ENCODE measurements at regions of chr3 and their contacts with region 1.

Region 1: GRCh38 chr3:171088964-171089754 is 62.6 kb upstream of the SLC2A2 start:
- DNase-seq: no peak
- CTCF ChIP-seq: no peak

Region 2: DNA sequence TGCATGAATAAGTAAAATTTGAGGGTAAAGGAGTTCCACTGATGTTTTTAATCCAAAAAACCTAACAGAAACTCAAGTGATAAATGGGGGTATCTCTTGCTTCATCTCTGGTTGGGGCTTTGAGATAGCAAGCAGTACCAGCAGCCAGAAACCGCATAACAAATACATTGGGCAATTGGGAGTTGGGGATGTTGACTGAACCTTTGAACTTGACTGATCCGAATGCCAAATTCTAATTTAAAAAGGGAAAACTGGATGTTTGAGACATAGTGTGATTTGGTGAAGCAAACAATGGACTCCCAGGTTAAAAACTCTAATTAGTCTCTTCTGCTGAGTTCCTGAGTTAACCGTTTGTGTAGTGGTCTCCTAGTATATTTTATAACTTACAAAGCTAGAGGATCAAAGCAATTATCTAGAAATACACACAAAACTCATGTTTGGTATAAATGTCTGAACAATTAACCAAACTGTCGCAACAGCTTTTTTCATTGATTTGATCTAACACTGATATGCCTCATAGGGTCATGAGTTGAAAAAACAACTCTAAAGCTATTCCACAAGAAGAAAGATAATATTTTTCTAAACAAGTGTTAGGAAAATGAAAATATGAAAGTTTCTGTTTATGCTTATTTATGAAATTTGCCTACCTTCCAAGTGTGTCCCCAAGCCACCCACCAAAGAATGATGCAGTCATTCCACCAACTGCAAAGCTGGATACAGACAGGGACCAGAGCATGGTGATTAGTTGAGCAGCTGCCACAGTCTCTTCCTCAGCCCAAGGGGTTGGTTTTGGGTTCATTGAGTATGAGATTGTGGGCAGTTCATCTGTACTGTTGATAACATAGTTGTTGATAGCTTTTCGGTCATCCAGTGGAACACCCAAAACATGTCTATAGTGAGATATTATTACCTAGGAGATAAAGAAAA is 75.1 kb before region 1 on chr3:
- CTCF ChIA-PET with region 1: no interaction called
- POLR2A ChIA-PET with region 1: no interaction called
- DNase-seq: no peak
- CTCF ChIP-seq: no peak

Region 3: DNA sequence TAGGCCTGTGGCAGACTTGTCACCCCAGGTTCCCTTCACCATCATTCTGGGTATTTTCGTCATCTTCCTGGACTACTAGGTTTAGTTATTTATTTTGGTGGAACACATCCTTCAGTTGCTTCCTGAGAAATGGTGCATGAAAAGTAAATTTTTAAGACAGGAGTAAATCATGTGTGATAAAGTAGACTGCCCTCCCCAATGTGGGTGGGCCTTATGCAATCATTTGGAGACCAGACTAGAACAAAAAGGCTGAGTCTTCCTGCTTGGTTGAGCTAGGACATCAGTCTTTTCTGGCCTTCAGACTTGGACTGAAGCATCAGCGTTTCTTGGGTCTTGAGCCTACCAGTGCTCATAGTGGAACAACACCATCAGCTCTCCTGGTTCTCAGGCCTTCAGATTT is 11.9 kb before region 1 on chr3:
- CTCF ChIA-PET with region 1: interaction called, 10 read pairs
- POLR2A ChIA-PET with region 1: no interaction called
- DNase-seq: no peak
- CTCF ChIP-seq: no peak

Region 4: GRCh38 chr3:171108066-171108465 is 18.9 kb after region 1 on chr3:
- CTCF ChIA-PET with region 1: interaction called, 12 read pairs
- POLR2A ChIA-PET with region 1: no interaction called
- DNase-seq: no peak
- CTCF ChIP-seq: no peak